CD14-positive monocyte (primary cell): ENCODE measurements at regions of chr16 and their contacts with region 1.

Region 1: GRCh38 chr16:50671644-50672260 is 9.4 kb downstream of the SNX20 start:
- DNase-seq: peak; percentile 57 to 65 (median 62)
- H3K4me3 ChIP-seq: peak overlapping the region in 1 of 3 experiments; percentile 23
- H3K4me3 Mint-ChIP-seq: no peak overlapping the region
- H3K27ac ChIP-seq: peak overlapping the region in 1 of 2 donors; percentile 58
- H3K27ac Mint-ChIP-seq: peak overlapping the region in 5 of 7 donors; percentile 18 to 78 (median 53)
- H3K4me1 ChIP-seq: peaks cover 11 to 29% of the 10 kb centered on the region in 2 donors
- H3K4me1 Mint-ChIP-seq: peaks cover 22% of the 10 kb centered on the region
- H3K27me3 ChIP-seq: no peaks in the 10 kb centered on the region
- H3K27me3 Mint-ChIP-seq: peaks cover 0 to 1% (median 0%) of the 10 kb centered on the region in 3 donors
- CTCF ChIP-seq: peak; percentile 76

Region 2: GRCh38 chr16:50711862-50712559 is 40.3 kb after region 1 on chr16:
- intact Hi-C with region 1: loop called (anchors 5 kb)
- DNase-seq: no peak
- H3K4me3 ChIP-seq: peak overlapping the region in 1 of 3 experiments; percentile 44
- H3K4me3 Mint-ChIP-seq: peak overlapping the region in 1 of 2 donors; percentile 21
- H3K27ac ChIP-seq: peak overlapping the region; percentile 50 to 92
- H3K27ac Mint-ChIP-seq: peak overlapping the region; percentile 84 to 92 (median 86)
- H3K4me1 ChIP-seq: peaks cover 96 to 99% of the 10 kb centered on the region in 2 donors
- H3K4me1 Mint-ChIP-seq: peaks cover 96% of the 10 kb centered on the region
- H3K27me3 ChIP-seq: no peaks in the 10 kb centered on the region
- H3K27me3 Mint-ChIP-seq: no peaks in the 10 kb centered on the region
- CTCF ChIP-seq: no peak

Region 3: GRCh38 chr16:50747207-50747956 is 75.6 kb after region 1 on chr16:
- intact Hi-C with region 1: loop called in 1 of 2 experiments (anchors 2 kb)
- DNase-seq: peak; percentile 23 to 33 (median 32)
- H3K4me3 ChIP-seq: no peak overlapping the region
- H3K4me3 Mint-ChIP-seq: no peak overlapping the region
- H3K27ac ChIP-seq: peak overlapping the region in 1 of 2 donors; percentile 2
- H3K27ac Mint-ChIP-seq: peak overlapping the region in 3 of 7 donors; percentile 8 to 50 (median 46)
- H3K4me1 ChIP-seq: peaks cover 19 to 45% of the 10 kb centered on the region in 2 donors
- H3K4me1 Mint-ChIP-seq: peaks cover 51% of the 10 kb centered on the region
- H3K27me3 ChIP-seq: no peaks in the 10 kb centered on the region
- H3K27me3 Mint-ChIP-seq: no peaks in the 10 kb centered on the region
- CTCF ChIP-seq: peak; percentile 66

Region 4: GRCh38 chr16:50761267-50761666 is 89.5 kb after region 1 on chr16:
- intact Hi-C with region 1: no loop called
- DNase-seq: no peak
- H3K4me3 ChIP-seq: no peak overlapping the region
- H3K4me3 Mint-ChIP-seq: no peak overlapping the region
- H3K27ac ChIP-seq: no peak overlapping the region
- H3K27ac Mint-ChIP-seq: peak overlapping the region in 1 of 7 donors; percentile 15
- H3K4me1 ChIP-seq: peaks cover 0 to 12% of the 10 kb centered on the region in 2 donors
- H3K4me1 Mint-ChIP-seq: peaks cover 11% of the 10 kb centered on the region
- H3K27me3 ChIP-seq: no peaks in the 10 kb centered on the region
- H3K27me3 Mint-ChIP-seq: no peaks in the 10 kb centered on the region
- CTCF ChIP-seq: no peak